Endothelial cell of umbilical vein (primary cell): ENCODE measurements at regions of chr19 and their contacts with region 1.

Region 1: DNA sequence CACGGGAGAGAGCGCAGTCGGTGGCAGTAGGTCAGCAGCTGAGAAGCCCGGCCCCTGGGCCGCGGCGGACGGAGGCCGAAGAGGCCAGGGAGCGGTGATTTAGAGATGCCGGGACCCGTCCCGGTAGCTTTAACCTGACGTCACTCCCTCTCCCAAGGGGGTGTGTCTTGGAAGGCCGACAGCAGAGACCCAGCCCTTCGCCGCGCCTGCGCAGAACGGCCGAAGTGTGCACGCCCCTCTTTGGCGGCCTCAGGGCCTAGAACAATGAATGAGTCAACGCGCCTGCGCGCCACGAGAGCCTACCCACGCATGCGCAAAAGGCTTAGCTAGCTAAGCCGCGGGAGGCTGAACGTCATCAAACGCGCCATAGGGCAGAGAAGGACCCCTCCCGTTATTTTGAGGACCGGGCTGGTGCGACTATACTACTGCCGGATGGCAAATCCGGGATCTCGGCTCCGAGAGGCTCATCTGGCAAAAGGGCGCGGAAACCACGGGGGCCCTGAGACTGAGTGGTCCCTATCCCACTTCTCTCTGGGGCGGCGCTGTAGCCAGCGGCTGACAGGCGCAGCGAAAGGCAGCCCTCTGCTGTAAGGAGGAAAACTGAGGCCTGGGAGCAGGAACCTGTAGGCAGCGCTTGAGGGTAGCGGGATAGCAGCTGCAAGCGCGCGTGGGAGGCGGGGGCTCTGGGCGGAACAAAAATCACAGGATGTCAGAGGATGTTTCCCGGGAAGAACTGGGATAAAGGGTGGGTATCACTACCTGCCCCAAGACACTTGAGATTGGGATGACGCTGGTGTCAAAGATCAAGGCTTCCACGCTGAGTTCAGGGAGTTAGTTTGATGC is at the starts of genes IRGQ and ZNF576:
- DNase-seq: peak; percentile 100
- H3K4me3 ChIP-seq: peak within 1 kb of the TSS; percentile 69 to 89 (median 74)
- H3K27ac ChIP-seq: peak within 1 kb of the TSS; percentile 96
- H3K4me1 ChIP-seq: peaks cover 24% of the 10 kb centered on the region
- H3K27me3 ChIP-seq: no peaks in the 10 kb centered on the region
- CTCF ChIP-seq: no peak
- POLR2A ChIP-seq: peak; percentile 81
- total RNA-seq, gene IRGQ: 33.2 and 34.1 TPM in 2 replicates
- total RNA-seq, gene ZNF576: 19.5 and 20.3 TPM in 2 replicates

Region 2: GRCh38 chr19:43519436-43520088 is 76.7 kb before region 1 on chr19:
- CTCF ChIA-PET with region 1: interaction called, 13 read pairs
- POLR2A ChIA-PET with region 1: no interaction called
- dilution Hi-C with region 1: no loop called
- intact Hi-C with region 1: no loop called
- DNase-seq: peak; percentile 78
- H3K4me3 ChIP-seq: no peak overlapping the region
- H3K27ac ChIP-seq: no peak overlapping the region
- H3K4me1 ChIP-seq: no peaks in the 10 kb centered on the region
- H3K27me3 ChIP-seq: no peaks in the 10 kb centered on the region
- CTCF ChIP-seq: peak; percentile 80 to 87
- POLR2A ChIP-seq: no peak

Region 3: GRCh38 chr19:43555185-43555770 is 40.9 kb before region 1 on chr19:
- CTCF ChIA-PET with region 1: interaction called, 158 read pairs
- POLR2A ChIA-PET with region 1: no interaction called
- dilution Hi-C with region 1: no loop called
- intact Hi-C with region 1: loop called (anchors 1 kb)
- DNase-seq: peak; percentile 70
- H3K4me3 ChIP-seq: no peak overlapping the region
- H3K27ac ChIP-seq: no peak overlapping the region
- H3K4me1 ChIP-seq: no peaks in the 10 kb centered on the region
- H3K27me3 ChIP-seq: no peaks in the 10 kb centered on the region
- CTCF ChIP-seq: peak; percentile 84 to 94
- POLR2A ChIP-seq: no peak

Region 4: DNA sequence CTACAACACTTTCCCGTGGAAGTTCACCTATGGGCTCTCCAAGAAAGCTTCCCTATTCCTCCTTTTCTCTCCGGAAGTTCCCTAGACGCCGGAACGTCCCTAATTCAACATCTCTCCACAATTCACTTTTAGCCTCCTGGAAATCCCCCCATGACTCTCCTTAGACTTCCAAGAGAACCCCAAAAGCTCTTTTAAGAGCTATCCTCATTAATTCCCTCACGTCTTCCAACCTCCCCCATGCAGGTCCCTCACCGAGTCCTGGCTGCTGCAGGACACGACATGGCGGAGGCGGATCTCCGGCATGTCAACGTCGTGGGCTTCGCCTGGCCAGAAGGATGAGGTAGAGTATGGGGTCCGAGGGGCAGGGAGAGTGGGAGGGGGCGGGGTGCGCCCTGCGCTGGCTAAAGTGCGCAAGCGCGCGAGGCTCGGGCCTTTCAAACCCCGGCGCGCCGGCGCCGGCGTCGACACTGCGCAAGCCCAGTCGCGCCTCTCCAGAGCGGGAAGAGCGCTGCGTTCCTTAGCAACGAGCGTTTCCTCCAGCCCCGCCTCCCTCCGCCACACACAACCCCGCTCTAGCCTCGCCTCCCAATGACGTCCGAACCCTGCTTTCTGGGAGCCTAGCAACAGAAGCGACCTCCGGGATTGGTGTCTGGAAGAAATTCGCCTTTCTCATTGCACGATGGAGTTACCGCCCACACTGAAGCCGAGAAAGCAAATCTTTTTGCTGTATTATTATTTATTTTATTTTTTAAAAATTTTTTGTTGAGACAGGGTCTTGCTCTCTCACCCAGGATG is 20.9 kb before region 1 on chr19 and contains the starts of genes PINLYP and XRCC1:
- CTCF ChIA-PET with region 1: interaction called, 14 read pairs
- POLR2A ChIA-PET with region 1: no interaction called
- dilution Hi-C with region 1: no loop called
- intact Hi-C with region 1: loop called (anchors 1 kb)
- DNase-seq: peak; percentile 99
- H3K4me3 ChIP-seq: peak within 1 kb of the TSS; percentile 52 to 86 (median 79)
- H3K27ac ChIP-seq: peak within 1 kb of the TSS; percentile 73
- H3K4me1 ChIP-seq: peaks cover 7% of the 10 kb centered on the region
- H3K27me3 ChIP-seq: no peaks in the 10 kb centered on the region
- CTCF ChIP-seq: no peak
- POLR2A ChIP-seq: peak; percentile 62
- total RNA-seq, gene PINLYP: 2.6 and 5.5 TPM in 2 replicates
- total RNA-seq, gene XRCC1: 37.3 and 39.3 TPM in 2 replicates

Region 5: GRCh38 chr19:43619262-43620060 is 23.2 kb after region 1 on chr19 and contains the start of gene ZNF428:
- CTCF ChIA-PET with region 1: interaction called, 3 read pairs
- POLR2A ChIA-PET with region 1: no interaction called
- dilution Hi-C with region 1: no loop called
- intact Hi-C with region 1: loop called (anchors 1 kb)
- DNase-seq: peak; percentile 95
- H3K4me3 ChIP-seq: peak within 1 kb of the TSS; percentile 31 to 75 (median 47)
- H3K27ac ChIP-seq: peak within 1 kb of the TSS; percentile 88
- H3K4me1 ChIP-seq: peaks cover 12% of the 10 kb centered on the region
- H3K27me3 ChIP-seq: no peaks in the 10 kb centered on the region
- CTCF ChIP-seq: no peak
- POLR2A ChIP-seq: peak; percentile 48
- total RNA-seq, gene ZNF428: 51.8 and 56.2 TPM in 2 replicates

Region 6: GRCh38 chr19:43668406-43669158 is 72.4 kb after region 1 on chr19:
- CTCF ChIA-PET with region 1: interaction called, 5 read pairs
- POLR2A ChIA-PET with region 1: interaction called, 6 read pairs
- dilution Hi-C with region 1: no loop called
- intact Hi-C with region 1: loop called (anchors 1 kb)
- DNase-seq: peak; percentile 99
- H3K4me3 ChIP-seq: peak overlapping the region; percentile 54 to 73 (median 73)
- H3K27ac ChIP-seq: peak overlapping the region; percentile 98
- H3K4me1 ChIP-seq: peaks cover 35% of the 10 kb centered on the region
- H3K27me3 ChIP-seq: no peaks in the 10 kb centered on the region
- CTCF ChIP-seq: no peak
- POLR2A ChIP-seq: no peak